PC-9 (cell line): ENCODE measurements at regions of chr4 and their contacts with region 1.

Region 1: DNA sequence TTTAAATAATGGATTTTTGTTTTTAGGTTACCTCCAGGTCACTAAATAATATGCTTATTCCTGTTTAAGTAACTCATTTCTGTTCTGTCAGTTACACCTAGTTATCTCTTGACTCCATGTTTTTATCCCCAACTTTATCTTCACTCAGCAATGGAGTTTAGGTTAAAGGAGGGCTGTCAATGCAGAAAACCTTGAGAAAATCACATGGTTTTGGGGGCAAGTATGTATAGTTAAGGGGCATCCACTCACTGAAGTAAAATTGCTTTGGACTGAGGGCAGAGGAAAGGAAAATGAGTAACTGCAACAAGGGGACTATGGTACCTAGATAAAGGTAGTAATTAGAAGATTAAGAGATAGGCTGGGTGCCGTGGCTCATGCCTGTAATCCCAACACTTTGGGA is 87.1 kb downstream of the UBE2K start:
- DNase-seq: no peak
- H3K4me3 ChIP-seq: no peak overlapping the region
- H3K27ac ChIP-seq: no peak overlapping the region
- H3K4me1 ChIP-seq: no peaks in the 10 kb centered on the region
- H3K27me3 ChIP-seq: no peaks in the 10 kb centered on the region
- CTCF ChIP-seq: no peak

Region 2: DNA sequence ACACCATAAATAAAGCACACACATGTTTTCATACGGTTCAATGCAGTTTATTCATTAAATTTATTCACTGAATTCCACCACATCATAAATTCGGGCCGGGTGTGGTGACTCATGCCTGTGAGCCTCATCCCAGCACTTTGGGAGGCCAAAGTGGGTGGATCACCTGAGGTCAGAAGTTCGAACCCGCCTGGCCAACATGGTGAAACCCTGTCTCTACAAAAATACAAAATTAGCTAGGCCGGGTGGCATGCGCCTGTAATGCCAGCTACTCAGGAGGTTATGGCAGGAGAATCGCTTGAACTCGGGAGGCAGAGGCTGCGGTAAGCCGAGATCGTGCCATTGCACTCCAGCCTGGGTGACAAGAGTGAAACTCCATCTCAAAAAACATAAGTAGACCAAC is 61.0 kb after region 1 on chr4:
- CTCF ChIA-PET with region 1: no interaction called
- POLR2A ChIA-PET with region 1: interaction called, 12 read pairs
- intact Hi-C with region 1: no loop called
- DNase-seq: no peak
- H3K4me3 ChIP-seq: no peak overlapping the region
- H3K27ac ChIP-seq: no peak overlapping the region
- H3K4me1 ChIP-seq: no peaks in the 10 kb centered on the region
- H3K27me3 ChIP-seq: no peaks in the 10 kb centered on the region
- CTCF ChIP-seq: no peak

Region 3: DNA sequence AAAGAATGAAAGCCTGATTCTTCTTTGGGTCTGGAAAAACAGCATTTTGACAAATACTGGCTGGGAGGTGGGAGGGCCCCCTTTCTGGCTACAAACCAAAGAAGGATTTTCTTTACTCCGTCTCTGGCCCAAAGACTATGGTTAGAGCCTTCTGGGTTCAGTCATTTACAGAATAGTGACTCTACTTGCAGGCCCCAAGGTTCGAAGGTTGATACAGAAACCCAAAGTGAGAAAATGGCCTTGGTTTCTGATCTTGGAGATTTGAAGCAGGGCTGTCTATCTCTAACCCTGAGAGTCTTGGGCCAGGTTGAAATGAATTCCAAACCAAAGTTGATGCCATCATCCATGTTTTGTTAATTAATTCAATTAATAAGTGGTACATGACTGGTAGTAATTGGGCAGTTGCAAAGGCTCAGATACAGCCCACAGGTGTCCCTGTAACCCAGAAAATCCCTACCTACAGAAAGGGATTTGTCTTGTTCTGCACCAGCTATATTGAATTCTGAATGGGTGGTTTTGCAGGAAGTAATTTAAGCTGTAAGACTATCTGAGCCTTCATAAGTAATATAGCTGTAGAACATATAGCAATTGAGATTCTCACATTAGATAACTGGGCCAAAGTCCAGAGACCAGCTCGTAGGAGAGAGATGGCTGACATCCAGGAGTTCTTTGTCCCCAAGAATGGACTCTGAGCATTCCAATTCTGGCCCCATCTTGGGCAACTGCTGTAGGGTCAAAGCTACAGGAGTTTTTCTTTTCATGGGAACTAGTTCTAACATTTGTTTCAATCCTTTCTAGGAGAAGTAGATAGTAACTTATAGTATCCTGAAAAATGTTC is 584.6 kb after region 1 on chr4:
- CTCF ChIA-PET with region 1: no interaction called
- POLR2A ChIA-PET with region 1: no interaction called
- intact Hi-C with region 1: no loop called
- DNase-seq: peak in 1 of 2 experiments; percentile 8
- H3K4me3 ChIP-seq: no peak overlapping the region
- H3K27ac ChIP-seq: no peak overlapping the region
- H3K4me1 ChIP-seq: peaks cover 15% of the 10 kb centered on the region
- H3K27me3 ChIP-seq: no peaks in the 10 kb centered on the region
- CTCF ChIP-seq: no peak

Region 4: DNA sequence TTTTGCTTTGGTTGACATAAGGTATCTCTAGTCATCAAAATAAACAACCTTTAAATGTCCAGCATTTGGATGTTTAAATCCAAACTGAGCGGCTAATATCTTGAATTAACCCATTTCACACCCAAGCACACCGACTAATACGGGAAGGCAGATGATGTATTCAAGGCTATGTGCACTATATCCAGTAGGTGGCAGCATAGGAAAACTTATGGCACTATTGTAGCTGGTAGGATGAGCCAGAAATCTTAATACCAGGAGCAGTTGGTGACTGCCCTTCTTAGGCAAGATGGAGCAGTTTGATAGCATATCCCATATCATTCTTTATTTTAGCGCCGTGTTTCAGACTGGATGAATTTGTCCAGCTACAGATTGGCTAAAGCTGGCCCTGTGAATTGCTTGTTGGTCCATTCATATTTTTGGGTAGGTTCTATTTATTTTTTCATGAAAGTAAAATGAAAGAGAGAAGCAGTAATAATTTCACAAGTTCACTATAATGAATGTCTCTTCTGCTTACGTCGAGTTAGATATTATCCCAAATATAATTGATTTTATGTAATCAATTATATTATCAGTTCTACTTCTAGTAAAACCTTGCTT is 1496.1 kb after region 1 on chr4:
- CTCF ChIA-PET with region 1: no interaction called
- POLR2A ChIA-PET with region 1: no interaction called
- intact Hi-C with region 1: no loop called
- DNase-seq: peak; percentile 48 to 72
- H3K4me3 ChIP-seq: no peak overlapping the region
- H3K27ac ChIP-seq: no peak overlapping the region
- H3K4me1 ChIP-seq: peaks cover 23% of the 10 kb centered on the region
- H3K27me3 ChIP-seq: no peaks in the 10 kb centered on the region
- CTCF ChIP-seq: peak; percentile 91